AG04450 (cell line): ENCODE measurements at regions of chr4 and their contacts with region 1.

Region 1: DNA sequence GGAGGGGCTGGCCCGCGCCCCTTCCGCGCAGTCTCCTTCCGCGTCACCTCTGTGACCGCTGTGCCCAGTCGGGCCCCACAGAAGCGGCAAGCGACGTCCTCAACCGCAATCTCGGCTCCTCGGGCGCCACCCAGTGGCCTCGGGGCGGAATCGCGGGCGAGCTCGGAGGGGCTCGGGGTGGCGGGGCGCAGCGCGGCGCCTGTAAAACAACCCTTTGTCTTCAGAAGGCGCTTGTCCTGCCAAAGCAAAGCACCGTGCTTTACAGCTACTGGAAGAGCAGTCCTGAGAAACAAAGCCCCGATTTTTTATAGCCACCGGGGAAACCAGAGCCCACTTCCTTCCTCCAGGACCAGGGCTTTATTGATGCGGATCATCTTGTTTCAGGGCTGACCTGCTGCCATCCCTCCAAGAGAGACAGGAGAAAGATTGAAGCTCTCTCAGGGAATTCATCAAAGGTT is 37.3 kb upstream of the CDKN2AIP start:
- DNase-seq: peak; percentile 13
- H3K4me3 ChIP-seq: peak overlapping the region; percentile 68
- H3K27ac ChIP-seq: no peak overlapping the region
- H3K27me3 ChIP-seq: no peaks in the 10 kb centered on the region
- CTCF ChIP-seq: peak; percentile 81

Region 2: DNA sequence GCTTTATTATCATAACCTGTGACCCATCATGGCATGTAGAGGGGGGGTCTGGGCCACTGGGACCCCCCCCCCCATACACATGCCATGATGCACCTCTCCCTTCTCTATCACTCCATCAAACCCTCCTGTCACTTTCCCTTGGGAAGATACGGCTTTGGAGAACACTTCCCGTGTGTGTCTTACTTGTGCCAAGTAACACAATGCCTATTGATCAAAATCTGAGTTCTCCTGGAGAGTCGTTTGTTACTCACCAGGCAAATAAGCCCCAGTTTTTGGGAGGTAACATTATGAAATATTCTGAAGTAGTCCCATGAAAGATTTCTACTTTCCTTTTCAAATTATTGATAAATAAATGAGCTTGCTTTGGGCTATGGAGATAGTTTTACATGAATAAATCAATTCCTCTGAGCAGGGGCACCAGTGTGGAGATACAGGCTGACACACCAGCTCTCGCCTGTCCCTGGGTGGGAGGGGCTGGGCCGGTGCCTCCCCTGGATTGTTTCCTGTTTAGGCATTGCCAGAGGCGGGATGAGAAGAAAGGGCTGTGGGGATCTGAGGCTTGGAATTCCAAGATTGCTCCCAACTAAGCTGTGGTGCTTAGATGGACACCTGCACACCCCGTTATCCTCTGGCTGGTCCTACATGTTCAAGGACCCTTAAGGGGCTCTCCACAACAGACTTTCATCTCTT is 371.3 kb before region 1 on chr4:
- CTCF ChIA-PET with region 1: interaction called, 14 read pairs
- POLR2A ChIA-PET with region 1: no interaction called
- DNase-seq: no peak
- H3K4me3 ChIP-seq: no peak overlapping the region
- H3K27ac ChIP-seq: no peak overlapping the region
- H3K27me3 ChIP-seq: peaks cover 16% of the 10 kb centered on the region
- CTCF ChIP-seq: no peak